Endothelial cell of umbilical vein (primary cell): ENCODE measurements at regions of chr9 and their contacts with region 1.

Region 1: GRCh38 chr9:98118640-98119601 is at the start of gene TRIM14:
- DNase-seq: peak; percentile 57
- H3K4me3 ChIP-seq: peak within 1 kb of the TSS; percentile 39 to 84 (median 62)
- H3K27ac ChIP-seq: no peak within 1 kb of the TSS
- H3K4me1 ChIP-seq: peaks cover 12% of the 10 kb centered on the region
- H3K27me3 ChIP-seq: no peaks in the 10 kb centered on the region
- CTCF ChIP-seq: peak in 1 of 2 donors; percentile 20
- POLR2A ChIP-seq: no peak
- total RNA-seq, gene TRIM14: 7.1 and 10.7 TPM in 2 replicates

Region 2: DNA sequence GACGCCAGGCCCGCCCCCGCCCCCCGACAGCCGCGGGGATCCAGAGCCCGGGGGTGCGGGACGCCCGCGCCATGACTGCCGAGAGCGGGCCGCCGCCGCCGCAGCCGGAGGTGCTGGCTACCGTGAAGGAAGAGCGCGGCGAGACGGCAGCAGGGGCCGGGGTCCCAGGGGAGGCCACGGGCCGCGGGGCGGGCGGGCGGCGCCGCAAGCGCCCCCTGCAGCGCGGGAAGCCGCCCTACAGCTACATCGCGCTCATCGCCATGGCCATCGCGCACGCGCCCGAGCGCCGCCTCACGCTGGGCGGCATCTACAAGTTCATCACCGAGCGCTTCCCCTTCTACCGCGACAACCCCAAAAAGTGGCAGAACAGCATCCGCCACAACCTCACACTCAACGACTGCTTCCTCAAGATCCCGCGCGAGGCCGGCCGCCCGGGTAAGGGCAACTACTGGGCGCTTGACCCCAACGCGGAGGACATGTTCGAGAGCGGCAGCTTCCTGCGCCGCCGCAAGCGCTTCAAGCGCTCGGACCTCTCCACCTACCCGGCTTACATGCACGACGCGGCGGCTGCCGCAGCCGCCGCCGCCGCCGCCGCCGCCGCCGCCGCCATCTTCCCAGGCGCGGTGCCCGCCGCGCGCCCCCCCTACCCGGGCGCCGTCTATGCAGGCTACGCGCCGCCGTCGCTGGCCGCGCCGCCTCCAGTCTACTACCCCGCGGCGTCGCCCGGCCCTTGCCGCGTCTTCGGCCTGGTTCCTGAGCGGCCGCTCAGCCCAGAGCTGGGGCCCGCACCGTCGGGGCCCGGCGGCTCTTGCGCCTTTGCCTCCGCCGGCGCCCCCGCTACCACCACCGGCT is 264.9 kb before region 1 on chr9:
- CTCF ChIA-PET with region 1: no interaction called
- POLR2A ChIA-PET with region 1: no interaction called
- dilution Hi-C with region 1: no loop called
- intact Hi-C with region 1: no loop called
- DNase-seq: no peak
- H3K4me3 ChIP-seq: peak overlapping the region in 1 of 3 experiments; percentile 8
- H3K27ac ChIP-seq: no peak overlapping the region
- H3K4me1 ChIP-seq: peaks cover under 1% of the 10 kb centered on the region
- H3K27me3 ChIP-seq: peaks cover 83 to 99% of the 10 kb centered on the region in 2 experiments
- CTCF ChIP-seq: peak in 1 of 2 donors; percentile 3
- POLR2A ChIP-seq: no peak

Region 3: DNA sequence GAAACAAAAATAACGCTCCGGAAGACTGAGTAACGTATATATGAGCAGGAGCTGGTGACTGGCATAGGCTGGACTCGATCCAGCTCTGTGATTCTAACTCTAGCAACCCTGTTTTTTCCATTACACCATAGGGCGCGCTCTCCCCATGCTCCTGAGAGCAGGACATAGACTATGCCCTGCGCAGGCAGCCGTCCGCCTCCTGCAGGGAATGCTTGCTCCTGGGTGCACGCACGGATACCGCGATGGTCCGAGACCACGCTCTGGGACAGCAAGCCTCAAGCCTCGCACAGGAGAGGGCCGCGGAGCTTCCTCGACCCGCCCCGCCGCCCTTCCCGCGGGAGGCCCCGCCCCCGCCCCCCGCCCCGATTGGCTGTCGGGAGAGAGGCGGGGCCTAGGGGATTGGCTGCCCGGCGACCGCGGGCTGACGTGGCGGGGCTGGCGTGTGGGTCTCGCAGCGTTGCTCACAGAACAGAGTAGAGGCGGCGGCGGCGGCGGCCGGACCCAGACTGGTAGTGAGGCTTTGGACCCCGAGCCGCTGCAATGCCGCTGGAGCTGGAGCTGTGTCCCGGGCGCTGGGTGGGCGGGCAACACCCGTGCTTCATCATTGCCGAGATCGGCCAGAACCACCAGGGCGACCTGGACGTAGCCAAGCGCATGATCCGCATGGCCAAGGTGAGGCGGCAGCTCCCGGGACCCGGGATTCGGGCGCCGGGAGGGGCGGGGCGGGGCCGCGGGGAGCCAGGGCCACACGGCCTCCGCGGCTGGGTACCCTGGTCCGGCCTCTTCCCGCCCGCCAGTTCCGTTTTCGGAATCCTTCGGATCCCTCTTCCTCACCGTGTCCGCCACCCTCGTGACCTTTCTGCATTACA is 62.4 kb before region 1 on chr9 and contains the start of gene NANS:
- CTCF ChIA-PET with region 1: no interaction called
- POLR2A ChIA-PET with region 1: no interaction called
- dilution Hi-C with region 1: no loop called
- intact Hi-C with region 1: loop called (anchors 1 kb)
- DNase-seq: peak; percentile 99
- H3K4me3 ChIP-seq: peak within 1 kb of the TSS; percentile 60 to 91 (median 69)
- H3K27ac ChIP-seq: peak within 1 kb of the TSS; percentile 80
- H3K4me1 ChIP-seq: peaks cover 15% of the 10 kb centered on the region
- H3K27me3 ChIP-seq: no peaks in the 10 kb centered on the region
- CTCF ChIP-seq: peak in 1 of 2 donors; percentile 8
- POLR2A ChIP-seq: peak; percentile 93
- total RNA-seq, gene NANS: 72.5 and 85.1 TPM in 2 replicates

Region 4: GRCh38 chr9:98192503-98193335 is 73.8 kb after region 1 on chr9 and contains the start of gene CORO2A:
- CTCF ChIA-PET with region 1: interaction called, 6 read pairs
- POLR2A ChIA-PET with region 1: no interaction called
- dilution Hi-C with region 1: no loop called
- intact Hi-C with region 1: loop called (anchors 2 kb)
- DNase-seq: peak; percentile 66
- H3K4me3 ChIP-seq: peak within 1 kb of the TSS; percentile 37 to 73 (median 59)
- H3K27ac ChIP-seq: no peak within 1 kb of the TSS
- H3K4me1 ChIP-seq: no peaks in the 10 kb centered on the region
- H3K27me3 ChIP-seq: no peaks in the 10 kb centered on the region
- CTCF ChIP-seq: peak; percentile 29 to 64
- POLR2A ChIP-seq: no peak
- total RNA-seq, gene CORO2A: 0.30 and 0.53 TPM in 2 replicates

Region 5: DNA sequence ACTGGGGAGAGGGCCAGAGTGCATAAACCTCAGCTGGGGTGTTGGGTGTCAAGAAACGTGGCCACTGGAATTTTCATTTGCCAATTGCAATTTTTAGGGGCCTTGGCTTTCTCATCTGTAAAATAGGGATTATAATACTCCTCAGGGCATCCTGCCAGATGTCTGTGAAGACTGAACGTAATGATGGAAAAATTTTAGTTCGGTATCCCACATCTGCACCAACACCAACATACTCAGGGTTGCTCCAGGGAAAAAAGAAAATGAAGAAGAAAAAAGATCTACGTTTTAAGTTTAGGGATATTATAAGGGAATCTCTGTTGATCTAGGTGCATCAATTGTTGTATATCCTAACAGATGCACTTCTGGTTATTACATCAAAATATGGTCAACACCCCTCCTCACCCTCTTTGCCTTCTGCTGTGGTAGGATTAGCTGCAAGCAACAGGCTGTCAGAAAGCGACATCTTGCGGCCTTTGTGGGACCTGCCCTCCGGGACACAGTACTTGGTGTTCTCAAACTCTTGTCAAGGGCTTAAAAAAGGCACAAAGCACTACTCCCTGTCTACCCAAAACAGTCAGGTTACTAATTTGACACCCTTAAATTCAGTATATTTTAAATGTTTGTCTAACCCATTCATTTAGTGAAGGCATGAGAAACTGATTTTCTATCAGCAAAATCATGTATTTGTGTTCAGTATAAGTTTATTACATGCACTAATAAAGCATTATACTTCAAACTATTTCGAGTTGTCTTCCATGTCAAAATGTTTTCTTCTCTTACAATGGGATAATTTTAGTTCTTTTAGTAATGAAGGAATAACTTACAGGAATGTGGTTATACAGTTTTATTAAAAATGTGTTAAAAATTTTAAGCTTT is 144.8 kb after region 1 on chr9:
- CTCF ChIA-PET with region 1: interaction called, 7 read pairs
- POLR2A ChIA-PET with region 1: no interaction called
- dilution Hi-C with region 1: no loop called
- intact Hi-C with region 1: loop called (anchors 2 kb)
- DNase-seq: peak; percentile 82
- H3K4me3 ChIP-seq: no peak overlapping the region
- H3K27ac ChIP-seq: no peak overlapping the region
- H3K4me1 ChIP-seq: no peaks in the 10 kb centered on the region
- H3K27me3 ChIP-seq: no peaks in the 10 kb centered on the region
- CTCF ChIP-seq: peak; percentile 90 to 92
- POLR2A ChIP-seq: no peak